OCI-LY7 (cell line): ENCODE measurements at regions of chr4 and their contacts with region 1.

Region 1: GRCh38 chr4:139416073-139416673 is 37.7 kb upstream of the RAB33B start:
- DNase-seq: peak; percentile 67
- H3K4me3 ChIP-seq: no peak overlapping the region
- H3K27ac ChIP-seq: no peak overlapping the region
- H3K4me1 ChIP-seq: peaks cover 5% of the 10 kb centered on the region
- CTCF ChIP-seq: peak; percentile 95

Region 2: DNA sequence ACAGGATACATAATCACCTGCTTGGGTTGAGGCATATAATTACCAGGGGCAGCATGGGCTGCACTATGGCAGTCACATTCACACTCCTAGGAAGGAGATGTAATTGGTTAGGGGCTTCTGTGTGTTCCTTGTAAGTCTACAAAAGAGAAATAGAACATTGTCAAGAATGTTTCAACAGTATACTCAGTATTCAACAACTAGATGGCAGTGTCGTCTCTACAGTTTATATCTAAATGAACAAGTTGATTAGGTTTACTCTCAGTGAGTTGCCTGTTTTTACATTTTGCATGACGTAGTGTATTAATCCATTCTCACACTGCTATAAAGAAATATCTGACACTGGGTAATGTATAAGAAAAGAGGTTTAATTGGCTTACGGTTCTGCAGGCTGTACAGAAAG is 12.7 kb before region 1 on chr4:
- CTCF ChIA-PET with region 1: no interaction called
- POLR2A ChIA-PET with region 1: no interaction called
- intact Hi-C with region 1: no loop called
- DNase-seq: peak; percentile 23
- H3K4me3 ChIP-seq: no peak overlapping the region
- H3K27ac ChIP-seq: no peak overlapping the region
- H3K4me1 ChIP-seq: no peaks in the 10 kb centered on the region
- CTCF ChIP-seq: peak; percentile 66

Region 3: DNA sequence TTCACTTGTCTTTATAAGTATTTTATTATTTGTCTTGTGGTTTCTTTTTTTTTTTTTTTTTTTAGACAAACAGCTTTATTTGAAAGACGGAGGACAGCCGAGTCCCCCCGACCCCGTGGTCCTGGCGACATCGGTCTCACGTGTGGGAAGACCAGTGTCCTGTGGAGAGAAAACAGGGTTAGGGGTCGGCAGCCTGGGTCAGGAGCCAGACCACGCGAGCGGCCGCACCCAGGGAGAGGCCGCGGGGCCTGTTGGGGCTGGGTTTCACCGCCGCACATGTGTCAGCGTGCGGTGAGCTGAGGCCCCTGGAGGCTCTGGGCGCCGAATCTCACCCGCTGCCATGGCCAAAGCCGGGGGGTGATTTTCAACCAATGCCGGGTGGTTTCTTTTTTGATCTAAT is 19.9 kb after region 1 on chr4:
- CTCF ChIA-PET with region 1: no interaction called
- POLR2A ChIA-PET with region 1: no interaction called
- intact Hi-C with region 1: loop called (anchors 2 kb)
- DNase-seq: no peak
- H3K4me3 ChIP-seq: no peak overlapping the region
- H3K27ac ChIP-seq: no peak overlapping the region
- H3K4me1 ChIP-seq: no peaks in the 10 kb centered on the region
- CTCF ChIP-seq: no peak

Region 4: GRCh38 chr4:139560406-139561104 is 144.4 kb after region 1 on chr4:
- CTCF ChIA-PET with region 1: no interaction called
- POLR2A ChIA-PET with region 1: interaction called, 4 read pairs
- intact Hi-C with region 1: loop called (anchors 1 kb)
- DNase-seq: peak; percentile 86
- H3K4me3 ChIP-seq: peak overlapping the region; percentile 59
- H3K27ac ChIP-seq: peak overlapping the region; percentile 87
- H3K4me1 ChIP-seq: peaks cover 43% of the 10 kb centered on the region
- CTCF ChIP-seq: no peak

Region 5: GRCh38 chr4:139656614-139657486 is 240.7 kb after region 1 on chr4:
- CTCF ChIA-PET with region 1: no interaction called
- POLR2A ChIA-PET with region 1: no interaction called
- intact Hi-C with region 1: loop called (anchors 5 kb)
- DNase-seq: peak; percentile 81
- H3K4me3 ChIP-seq: no peak overlapping the region
- H3K27ac ChIP-seq: no peak overlapping the region
- H3K4me1 ChIP-seq: peaks cover 3% of the 10 kb centered on the region
- CTCF ChIP-seq: peak; percentile 88